ENCODE measurements at regions of chr10 and their contacts with region 1.

Region 1: GRCh38 chr10:15106352-15107013 is 9.3 kb downstream of the RPP38 start:
- DNase-seq: no peak

Region 2: DNA sequence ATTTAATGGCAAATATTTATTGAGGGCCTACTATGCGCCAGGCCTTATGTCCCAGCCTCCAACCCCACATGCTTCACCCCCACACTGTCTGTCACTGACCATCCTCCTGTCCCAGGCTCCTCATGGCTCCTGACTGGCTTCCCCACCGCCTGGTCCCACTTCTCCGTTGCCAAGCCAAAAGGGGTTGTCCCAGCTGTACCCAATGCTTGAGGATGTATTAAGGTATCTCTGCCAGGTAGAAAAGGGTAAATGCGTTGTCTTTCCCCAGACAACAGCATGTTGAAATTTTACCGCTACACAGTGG is 606.9 kb before region 1 on chr10:
- intact Hi-C with region 1: loop called (anchors 5 kb)
- DNase-seq: no peak

Measured in cardiac septum (tissue), 1 donor.